Left ventricle myocardium superior (tissue), 1 donor: ENCODE measurements at regions of chr2 and their contacts with region 1.

Region 1: DNA sequence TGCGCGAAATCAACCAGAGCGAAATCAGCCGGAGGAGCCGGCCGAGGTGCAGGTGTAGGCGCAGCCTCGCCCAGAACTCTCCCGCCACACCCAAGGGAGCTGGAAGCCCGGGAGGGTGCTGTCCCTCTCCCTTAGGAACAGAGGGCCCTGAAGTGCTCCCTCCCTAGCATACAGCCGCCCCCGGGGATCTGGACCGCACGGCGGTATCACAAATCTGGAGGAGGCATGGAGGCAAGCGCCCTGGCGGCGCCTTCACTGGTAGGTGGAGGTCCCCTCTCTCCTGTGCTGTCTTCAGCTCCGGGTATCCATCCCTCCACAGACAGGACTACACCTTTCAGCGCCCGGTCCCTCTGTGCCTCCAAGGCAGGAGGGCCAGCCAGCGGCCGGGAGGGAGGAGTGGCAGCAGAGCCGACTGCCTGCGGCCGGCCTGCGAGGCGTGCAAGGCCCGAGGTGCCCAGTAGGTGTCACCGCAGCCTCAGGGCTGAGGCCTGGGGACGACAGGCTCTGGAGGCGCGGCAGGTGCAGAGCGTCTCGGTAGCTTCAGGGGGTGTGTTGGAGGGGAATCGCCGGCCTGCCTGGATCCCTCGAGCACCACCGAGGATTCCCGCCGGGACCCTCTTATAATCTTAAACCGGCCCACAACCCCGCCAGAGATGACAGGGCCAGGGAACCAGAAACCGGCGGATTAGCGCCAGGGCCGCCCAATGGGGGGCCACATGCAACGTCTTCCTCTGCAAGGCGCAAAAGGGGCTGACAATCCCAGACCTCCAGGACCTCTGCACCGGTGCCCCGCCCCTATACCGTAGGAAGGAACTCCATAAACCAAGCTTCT is 2.8 kb downstream of the IHH start:
- DNase-seq: peak; percentile 88
- ATAC-seq: peak; percentile 97

Region 2: GRCh38 chr2:218927422-218927821 is 130.5 kb before region 1 on chr2:
- intact Hi-C with region 1: no loop called
- DNase-seq: no peak
- ATAC-seq: no peak

Region 3: GRCh38 chr2:219119422-219120043 is 61.6 kb after region 1 on chr2:
- intact Hi-C with region 1: loop called (anchors 5 kb)
- DNase-seq: peak; percentile 67
- ATAC-seq: peak; percentile 79

Region 4: DNA sequence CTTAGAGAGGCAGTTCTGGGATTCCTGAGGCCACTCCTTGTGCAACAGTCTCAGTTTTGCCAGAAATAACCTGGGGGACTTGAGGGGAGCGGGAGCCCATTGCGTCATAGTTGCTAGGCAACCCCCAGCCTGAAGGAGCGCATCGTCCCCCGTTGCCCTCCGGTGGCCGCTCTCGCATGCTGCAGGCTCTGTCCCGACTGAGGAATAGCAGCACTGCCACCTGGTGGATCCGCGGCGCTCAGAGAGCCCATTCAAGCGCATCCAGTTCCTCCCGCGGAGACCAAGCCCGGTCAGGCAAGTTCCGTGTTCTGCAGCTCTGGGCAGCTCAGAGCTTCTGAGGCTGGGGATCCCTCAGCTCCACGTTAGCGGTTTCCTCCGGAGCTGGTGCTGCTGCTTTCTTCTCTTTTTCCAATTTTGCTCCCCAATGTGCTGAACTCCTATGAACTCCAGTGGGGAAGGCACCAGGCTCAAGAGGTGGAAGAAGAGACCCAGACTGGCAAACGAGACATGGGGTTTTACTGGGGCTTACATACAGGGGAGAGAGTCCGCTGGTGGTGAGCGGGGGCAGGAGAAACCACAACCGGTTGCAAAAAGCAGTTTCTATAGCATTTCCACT is 584.6 kb after region 1 on chr2:
- intact Hi-C with region 1: no loop called
- DNase-seq: peak; percentile 98
- ATAC-seq: peak; percentile 58